Right cardiac atrium (tissue), 5 donors: ENCODE measurements at regions of chr1 and their contacts with region 1.

Region 1: GRCh38 chr1:35726450-35727433 is 8.1 kb upstream of the C1orf216 start:
- DNase-seq: peak in 2 of 3 donors; percentile 50 to 69
- ATAC-seq: peak; percentile 83 to 90
- H3K4me3 ChIP-seq: no peak overlapping the region
- H3K27ac ChIP-seq: no peak overlapping the region
- H3K4me1 ChIP-seq: no peaks in the 10 kb centered on the region
- H3K27me3 ChIP-seq: no peaks in the 10 kb centered on the region

Region 2: DNA sequence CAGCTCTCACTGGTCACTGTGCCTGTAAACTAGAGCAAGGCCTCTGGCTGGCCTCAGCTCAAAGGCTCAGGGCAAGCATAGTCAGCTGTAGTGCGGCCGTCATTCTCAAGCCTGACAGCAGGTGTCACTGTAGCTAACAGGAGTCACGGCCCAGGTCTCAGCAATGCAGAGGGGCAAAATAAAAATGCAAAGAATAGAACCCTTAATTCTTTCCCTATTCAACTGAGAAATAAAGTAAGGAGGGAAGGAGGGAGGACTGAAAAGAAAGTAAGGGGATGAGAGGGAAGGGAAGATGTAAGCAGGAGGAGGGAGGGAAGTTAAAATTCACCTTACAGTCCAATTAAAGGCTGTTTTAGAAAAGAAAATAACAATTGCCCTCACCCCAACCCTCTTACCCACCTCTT is 275.6 kb before region 1 on chr1:
- intact Hi-C with region 1: loop called in 2 of 4 experiments (anchors 5 to 10 kb)
- DNase-seq: peak; percentile 84 to 95 (median 92)
- ATAC-seq: peak; percentile 85 to 89
- H3K4me3 ChIP-seq: no peak overlapping the region
- H3K27ac ChIP-seq: no peak overlapping the region
- H3K4me1 ChIP-seq: peaks cover 10% of the 10 kb centered on the region
- H3K27me3 ChIP-seq: no peaks in the 10 kb centered on the region

Region 3: GRCh38 chr1:35569936-35570335 is 156.8 kb before region 1 on chr1:
- intact Hi-C with region 1: loop called (anchors 2 to 5 kb)
- DNase-seq: no peak
- ATAC-seq: no peak
- H3K4me3 ChIP-seq: no peak overlapping the region
- H3K27ac ChIP-seq: no peak overlapping the region
- H3K4me1 ChIP-seq: no peaks in the 10 kb centered on the region
- H3K27me3 ChIP-seq: no peaks in the 10 kb centered on the region

Region 4: DNA sequence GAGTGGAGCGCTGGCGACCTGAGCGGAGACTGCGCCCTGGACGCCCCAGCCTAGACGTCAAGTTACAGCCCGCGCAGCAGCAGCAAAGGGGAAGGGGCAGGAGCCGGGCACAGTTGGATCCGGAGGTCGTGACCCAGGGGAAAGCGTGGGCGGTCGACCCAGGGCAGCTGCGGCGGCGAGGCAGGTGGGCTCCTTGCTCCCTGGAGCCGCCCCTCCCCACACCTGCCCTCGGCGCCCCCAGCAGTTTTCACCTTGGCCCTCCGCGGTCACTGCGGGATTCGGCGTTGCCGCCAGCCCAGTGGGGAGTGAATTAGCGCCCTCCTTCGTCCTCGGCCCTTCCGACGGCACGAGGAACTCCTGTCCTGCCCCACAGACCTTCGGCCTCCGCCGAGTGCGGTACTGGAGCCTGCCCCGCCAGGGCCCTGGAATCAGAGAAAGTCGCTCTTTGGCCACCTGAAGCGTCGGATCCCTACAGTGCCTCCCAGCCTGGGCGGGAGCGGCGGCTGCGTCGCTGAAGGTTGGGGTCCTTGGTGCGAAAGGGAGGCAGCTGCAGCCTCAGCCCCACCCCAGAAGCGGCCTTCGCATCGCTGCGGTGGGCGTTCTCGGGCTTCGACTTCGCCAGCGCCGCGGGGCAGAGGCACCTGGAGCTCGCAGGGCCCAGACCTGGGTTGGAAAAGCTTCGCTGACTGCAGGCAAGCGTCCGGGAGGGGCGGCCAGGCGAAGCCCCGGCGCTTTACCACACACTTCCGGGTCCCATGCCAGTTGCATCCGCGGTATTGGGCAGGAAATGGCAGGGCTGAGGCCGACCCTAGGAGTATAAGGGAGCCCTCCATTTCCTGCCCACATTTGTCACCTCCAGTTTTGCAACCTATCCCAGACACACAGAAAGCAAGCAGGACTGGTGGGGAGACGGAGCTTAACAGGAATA is 149.4 kb before region 1 on chr1:
- intact Hi-C with region 1: loop called in 2 of 4 experiments (anchors 5 kb)
- DNase-seq: peak; percentile 49 to 80 (median 76)
- ATAC-seq: peak; percentile 47 to 66
- H3K4me3 ChIP-seq: peak overlapping the region; percentile 55
- H3K27ac ChIP-seq: no peak overlapping the region
- H3K4me1 ChIP-seq: peaks cover 4% of the 10 kb centered on the region
- H3K27me3 ChIP-seq: no peaks in the 10 kb centered on the region

Region 5: GRCh38 chr1:35857830-35858229 is 131.1 kb after region 1 on chr1:
- intact Hi-C with region 1: no loop called
- DNase-seq: no peak
- ATAC-seq: no peak
- H3K4me3 ChIP-seq: no peak overlapping the region
- H3K27ac ChIP-seq: no peak overlapping the region
- H3K4me1 ChIP-seq: no peaks in the 10 kb centered on the region
- H3K27me3 ChIP-seq: no peaks in the 10 kb centered on the region